Activated B cell treated with CpG ODN at 0.5 μM for 24 hours (primary cell): ENCODE measurements at regions of chr5 and their contacts with region 1.

Region 1: DNA sequence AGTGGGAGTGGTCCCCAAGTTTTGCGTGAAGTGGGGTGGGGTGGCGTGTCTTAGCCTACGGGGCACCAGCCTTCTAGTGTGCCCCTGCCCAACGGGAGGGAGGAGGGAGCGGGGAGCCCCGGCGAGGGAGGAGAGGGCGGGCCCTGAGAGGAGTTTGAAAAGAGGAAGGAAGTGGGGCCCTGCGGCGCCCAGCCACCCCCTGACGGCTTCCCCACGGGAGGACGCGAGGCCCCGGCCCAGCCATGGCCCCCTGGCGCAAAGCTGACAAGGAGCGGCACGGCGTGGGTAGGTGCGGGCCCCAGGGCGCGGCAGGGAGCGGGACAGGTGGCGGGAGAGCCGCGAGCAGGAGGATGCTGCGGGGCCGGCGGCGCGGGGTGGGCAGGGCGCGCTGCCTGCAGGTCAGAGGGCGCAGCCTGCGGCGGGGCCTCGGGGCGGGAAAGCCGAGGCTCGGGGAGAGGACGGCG is at the start of gene DOCK2:
- DNase-seq: peak; percentile 76
- ATAC-seq: peak; percentile 92
- H3K4me3 Mint-ChIP-seq: peak within 1 kb of the TSS; percentile 90
- H3K27ac Mint-ChIP-seq: peak within 1 kb of the TSS; percentile 91
- H3K4me1 Mint-ChIP-seq: peaks cover 54% of the 10 kb centered on the region
- H3K27me3 Mint-ChIP-seq: no peaks in the 10 kb centered on the region
- CTCF ChIP-seq: no peak
- total RNA-seq, gene DOCK2: 274 and 344 TPM in 2 replicates

Region 2: DNA sequence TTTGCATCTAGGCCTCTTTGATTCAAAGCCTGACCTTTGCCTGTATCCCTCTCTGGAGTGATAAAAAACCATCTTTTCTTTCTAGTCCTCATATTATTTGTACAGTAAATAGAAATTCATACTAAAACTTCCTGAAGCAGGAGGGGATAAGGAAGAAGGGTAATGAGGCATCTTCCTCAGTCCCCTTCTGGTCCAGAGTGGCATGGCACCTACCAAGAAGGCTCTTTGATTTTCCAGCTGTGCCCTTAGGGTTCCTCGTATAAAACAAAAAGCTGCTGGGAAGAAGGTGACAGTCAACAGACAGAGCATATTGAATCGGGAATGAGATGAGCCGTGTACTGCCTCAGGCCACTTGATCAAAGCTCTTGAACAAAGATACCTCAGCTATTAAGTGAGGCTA is 125.4 kb before region 1 on chr5:
- CTCF ChIA-PET with region 1: no interaction called
- POLR2A ChIA-PET with region 1: no interaction called
- intact Hi-C with region 1: no loop called
- DNase-seq: no peak
- ATAC-seq: no peak
- H3K4me3 Mint-ChIP-seq: no peak overlapping the region
- H3K27ac Mint-ChIP-seq: no peak overlapping the region
- H3K4me1 Mint-ChIP-seq: no peaks in the 10 kb centered on the region
- H3K27me3 Mint-ChIP-seq: peaks cover 5% of the 10 kb centered on the region
- CTCF ChIP-seq: no peak

Region 3: DNA sequence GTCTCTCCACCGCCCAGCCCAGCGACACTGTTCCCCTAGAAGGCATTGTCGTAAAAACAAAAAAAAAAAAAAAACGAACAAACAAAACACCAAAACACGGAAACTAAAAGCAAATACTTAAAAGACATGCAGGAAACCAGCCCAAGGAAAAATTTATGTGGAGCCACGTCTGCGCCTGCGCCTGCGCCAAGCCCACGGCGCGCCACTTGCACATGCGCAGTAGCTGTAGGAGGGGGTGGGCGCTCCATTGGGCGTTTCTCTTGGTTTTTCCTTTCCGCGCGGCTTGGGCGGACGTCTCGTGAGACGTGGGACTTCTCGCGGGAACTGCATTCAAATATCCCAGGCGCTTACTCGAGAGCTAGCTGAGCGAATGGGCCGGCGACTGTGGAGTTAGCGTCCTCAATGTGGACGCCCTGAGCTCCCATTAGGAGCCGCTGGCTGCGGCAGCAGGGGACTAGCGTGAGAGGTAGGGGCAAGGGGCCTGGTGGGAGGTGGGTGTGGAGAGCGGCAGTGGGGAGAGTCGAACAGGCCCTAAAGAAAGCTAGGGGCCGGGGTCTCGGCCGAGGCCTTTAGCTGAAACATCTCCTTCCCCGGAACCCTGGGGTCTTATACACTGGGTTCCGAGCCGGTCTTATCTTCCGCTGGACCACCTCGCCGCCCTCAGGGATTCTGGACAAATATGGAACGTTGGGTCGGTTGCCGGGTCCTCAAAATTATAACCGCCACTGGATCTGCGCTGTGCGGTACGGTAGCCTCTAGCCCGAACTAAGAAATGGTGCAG is 53.5 kb before region 1 on chr5 and contains the start of gene SPDL1:
- CTCF ChIA-PET with region 1: interaction called, 7 read pairs
- POLR2A ChIA-PET with region 1: interaction called, 46 read pairs
- intact Hi-C with region 1: loop called (anchors 1 kb)
- DNase-seq: peak; percentile 84
- ATAC-seq: peak; percentile 93
- H3K4me3 Mint-ChIP-seq: peak within 1 kb of the TSS; percentile 99
- H3K27ac Mint-ChIP-seq: peak within 1 kb of the TSS; percentile 93
- H3K4me1 Mint-ChIP-seq: peaks cover 24% of the 10 kb centered on the region
- H3K27me3 Mint-ChIP-seq: peaks cover 6% of the 10 kb centered on the region
- CTCF ChIP-seq: no peak
- total RNA-seq, gene SPDL1: 13.3 and 20.6 TPM in 2 replicates

Region 4: DNA sequence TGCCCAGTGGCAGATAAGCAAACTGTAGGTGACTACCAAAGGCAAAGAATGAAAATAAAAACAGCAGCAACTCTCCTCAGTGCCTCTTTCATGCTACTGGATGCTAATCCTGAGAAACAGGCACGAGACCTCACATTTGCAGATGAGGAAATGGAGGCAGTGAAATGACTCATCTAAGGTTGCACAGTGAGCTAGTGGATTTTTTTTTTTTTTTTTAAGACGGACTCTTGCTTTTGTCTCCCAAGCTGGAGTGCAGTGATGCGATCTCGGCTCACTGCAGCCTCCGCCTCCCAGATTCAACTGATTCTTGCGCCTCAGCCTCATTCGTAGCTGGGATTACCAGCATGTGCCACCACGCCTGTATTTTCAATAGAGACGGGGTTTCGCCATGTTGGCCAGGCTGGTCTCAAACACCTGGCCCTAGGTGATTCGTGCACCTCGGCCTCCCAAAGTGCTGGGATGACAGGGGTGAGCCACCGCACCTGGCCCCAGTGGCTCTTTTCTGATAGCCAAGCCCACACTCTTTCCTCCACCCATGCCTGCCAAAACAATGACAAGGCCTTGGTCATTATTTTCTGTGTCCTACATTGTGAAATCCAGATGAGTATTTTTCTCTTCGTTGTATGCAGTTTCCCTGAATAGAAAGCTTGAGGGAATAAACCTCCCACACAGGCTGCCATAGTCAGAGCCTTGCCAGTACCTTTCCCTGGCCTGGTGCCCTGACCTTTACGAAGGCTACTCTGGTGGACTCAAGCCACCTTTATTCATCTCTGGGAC is 19.2 kb after region 1 on chr5:
- CTCF ChIA-PET with region 1: interaction called, 3 read pairs
- POLR2A ChIA-PET with region 1: interaction called, 14 read pairs
- intact Hi-C with region 1: loop called (anchors 1 kb)
- DNase-seq: no peak
- ATAC-seq: peak; percentile 76
- H3K4me3 Mint-ChIP-seq: peak overlapping the region; percentile 33
- H3K27ac Mint-ChIP-seq: peak overlapping the region; percentile 59
- H3K4me1 Mint-ChIP-seq: peaks cover 71% of the 10 kb centered on the region
- H3K27me3 Mint-ChIP-seq: no peaks in the 10 kb centered on the region
- CTCF ChIP-seq: no peak

Region 5: DNA sequence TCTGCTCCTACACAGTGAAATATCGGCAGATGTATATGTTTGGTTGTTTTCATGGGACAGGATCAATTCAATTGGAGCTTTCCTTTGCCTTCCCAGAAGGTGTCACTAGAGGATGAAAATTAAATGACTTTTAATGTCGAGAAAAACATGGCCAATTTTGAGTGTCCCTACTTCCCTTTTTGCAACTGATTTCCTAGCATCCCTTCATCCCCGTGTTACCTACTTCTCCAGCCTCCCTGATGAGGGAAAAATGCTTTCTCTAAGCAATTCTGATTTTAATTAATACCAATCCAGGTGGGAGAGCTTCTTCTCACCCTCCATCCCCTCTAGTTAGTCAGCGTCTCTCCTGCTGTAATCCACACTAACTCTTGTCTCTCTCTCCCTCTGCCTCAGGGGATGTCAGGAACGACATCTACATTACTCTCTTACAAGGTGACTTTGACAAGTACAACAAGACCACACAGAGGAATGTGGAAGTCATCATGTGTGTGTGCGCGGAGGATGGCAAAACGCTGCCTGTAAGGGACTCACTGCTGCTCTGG is 64.9 kb after region 1 on chr5:
- CTCF ChIA-PET with region 1: interaction called, 3 read pairs
- POLR2A ChIA-PET with region 1: interaction called, 3 read pairs
- intact Hi-C with region 1: loop called (anchors 2 kb)
- DNase-seq: no peak
- ATAC-seq: no peak
- H3K4me3 Mint-ChIP-seq: no peak overlapping the region
- H3K27ac Mint-ChIP-seq: peak overlapping the region; percentile 81
- H3K4me1 Mint-ChIP-seq: peaks cover 51% of the 10 kb centered on the region
- H3K27me3 Mint-ChIP-seq: no peaks in the 10 kb centered on the region
- CTCF ChIP-seq: no peak

Region 6: DNA sequence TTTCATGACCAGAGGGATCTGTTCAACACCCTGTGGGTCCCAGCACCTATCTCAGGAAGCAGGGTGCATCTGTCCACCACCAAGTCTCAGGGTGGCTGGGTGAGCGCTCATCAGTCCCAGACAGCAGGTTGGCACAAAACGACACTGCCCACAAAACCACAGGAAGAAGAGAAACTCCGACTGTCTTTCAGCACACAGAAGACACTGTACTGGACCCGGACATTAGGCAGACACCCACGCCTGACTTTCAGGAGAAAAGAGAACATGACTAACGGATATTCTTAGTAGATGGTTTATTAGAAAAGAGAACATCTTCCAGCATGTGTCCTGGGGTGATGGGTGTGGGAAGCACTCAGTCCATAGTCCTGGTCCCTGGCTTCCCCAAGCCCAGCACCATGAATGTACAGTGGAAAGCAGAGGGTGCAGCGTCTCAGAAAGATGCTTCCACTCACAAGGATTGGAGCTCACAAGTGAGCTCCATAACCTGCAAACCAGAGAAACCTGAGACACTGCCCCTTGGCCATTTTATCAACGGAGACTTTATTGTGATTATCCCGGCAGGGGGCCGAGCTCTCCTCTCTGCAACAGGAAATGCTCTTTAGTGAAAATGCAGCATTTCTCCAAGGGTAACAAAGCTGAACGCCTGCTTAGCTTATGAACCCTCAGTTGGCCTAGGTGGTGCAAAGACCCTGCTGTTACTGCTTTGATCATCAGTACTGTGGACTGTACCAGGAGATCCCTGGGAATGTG is 696.2 kb after region 1 on chr5:
- CTCF ChIA-PET with region 1: no interaction called
- POLR2A ChIA-PET with region 1: no interaction called
- intact Hi-C with region 1: loop called (anchors 1 kb)
- DNase-seq: no peak
- ATAC-seq: no peak
- H3K4me3 Mint-ChIP-seq: peak overlapping the region; percentile 25
- H3K27ac Mint-ChIP-seq: no peak overlapping the region
- H3K4me1 Mint-ChIP-seq: peaks cover 10% of the 10 kb centered on the region
- H3K27me3 Mint-ChIP-seq: no peaks in the 10 kb centered on the region
- CTCF ChIP-seq: no peak

Region 7: DNA sequence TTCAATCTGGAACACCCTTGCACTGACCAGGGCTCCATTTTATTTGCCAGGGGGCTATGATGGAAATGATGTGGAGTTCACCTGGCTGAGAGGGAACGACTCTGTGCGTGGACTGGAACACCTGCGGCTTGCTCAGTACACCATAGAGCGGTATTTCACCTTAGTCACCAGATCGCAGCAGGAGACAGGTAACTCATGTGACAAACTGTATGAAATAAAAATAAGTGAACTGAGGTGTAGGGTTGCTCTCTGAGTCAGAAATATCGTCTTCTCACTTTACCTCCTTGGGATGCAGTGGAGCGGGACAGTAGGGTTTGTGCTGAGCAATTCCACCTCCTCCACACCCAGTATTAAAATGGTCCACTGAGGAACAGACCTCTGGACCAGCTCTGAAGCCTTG is 1168.5 kb after region 1 on chr5:
- CTCF ChIA-PET with region 1: no interaction called
- POLR2A ChIA-PET with region 1: no interaction called
- intact Hi-C with region 1: no loop called
- DNase-seq: no peak
- ATAC-seq: no peak
- H3K4me3 Mint-ChIP-seq: no peak overlapping the region
- H3K27ac Mint-ChIP-seq: no peak overlapping the region
- H3K4me1 Mint-ChIP-seq: no peaks in the 10 kb centered on the region
- H3K27me3 Mint-ChIP-seq: peaks cover 16% of the 10 kb centered on the region
- CTCF ChIP-seq: no peak

Region 8: GRCh38 chr5:171023508-171023907 is 1386.4 kb after region 1 on chr5:
- CTCF ChIA-PET with region 1: no interaction called
- POLR2A ChIA-PET with region 1: no interaction called
- intact Hi-C with region 1: no loop called
- DNase-seq: no peak
- ATAC-seq: no peak
- H3K4me3 Mint-ChIP-seq: no peak overlapping the region
- H3K27ac Mint-ChIP-seq: no peak overlapping the region
- H3K4me1 Mint-ChIP-seq: no peaks in the 10 kb centered on the region
- H3K27me3 Mint-ChIP-seq: no peaks in the 10 kb centered on the region
- CTCF ChIP-seq: no peak